A673 (cell line): ENCODE measurements at regions of chr9 and their contacts with region 1.

Region 1: DNA sequence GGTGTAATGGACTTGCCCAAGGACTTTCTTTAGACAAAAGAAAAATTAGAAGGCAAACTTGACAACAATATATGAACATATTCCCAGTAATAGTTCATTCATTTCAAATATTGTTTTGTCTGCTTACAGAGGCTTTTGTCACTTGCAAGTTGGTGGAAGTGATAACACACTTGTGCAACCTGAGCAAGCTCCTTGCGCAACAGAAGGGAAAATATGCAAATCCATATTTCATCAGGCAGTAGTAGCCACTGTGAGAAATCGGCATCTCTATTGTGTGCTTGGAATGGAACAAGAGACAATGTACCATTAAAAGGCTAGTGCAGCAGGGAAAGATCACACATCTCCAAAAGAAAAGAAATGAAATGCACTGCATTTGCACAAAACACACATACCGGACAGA is 125.3 kb upstream of the RASEF start:
- DNase-seq: no peak
- H3K4me3 ChIP-seq: no peak overlapping the region
- H3K27ac ChIP-seq: no peak overlapping the region
- H3K4me1 ChIP-seq: no peaks in the 10 kb centered on the region
- H3K27me3 ChIP-seq: peaks cover 21% of the 10 kb centered on the region
- CTCF ChIP-seq: no peak

Region 2: DNA sequence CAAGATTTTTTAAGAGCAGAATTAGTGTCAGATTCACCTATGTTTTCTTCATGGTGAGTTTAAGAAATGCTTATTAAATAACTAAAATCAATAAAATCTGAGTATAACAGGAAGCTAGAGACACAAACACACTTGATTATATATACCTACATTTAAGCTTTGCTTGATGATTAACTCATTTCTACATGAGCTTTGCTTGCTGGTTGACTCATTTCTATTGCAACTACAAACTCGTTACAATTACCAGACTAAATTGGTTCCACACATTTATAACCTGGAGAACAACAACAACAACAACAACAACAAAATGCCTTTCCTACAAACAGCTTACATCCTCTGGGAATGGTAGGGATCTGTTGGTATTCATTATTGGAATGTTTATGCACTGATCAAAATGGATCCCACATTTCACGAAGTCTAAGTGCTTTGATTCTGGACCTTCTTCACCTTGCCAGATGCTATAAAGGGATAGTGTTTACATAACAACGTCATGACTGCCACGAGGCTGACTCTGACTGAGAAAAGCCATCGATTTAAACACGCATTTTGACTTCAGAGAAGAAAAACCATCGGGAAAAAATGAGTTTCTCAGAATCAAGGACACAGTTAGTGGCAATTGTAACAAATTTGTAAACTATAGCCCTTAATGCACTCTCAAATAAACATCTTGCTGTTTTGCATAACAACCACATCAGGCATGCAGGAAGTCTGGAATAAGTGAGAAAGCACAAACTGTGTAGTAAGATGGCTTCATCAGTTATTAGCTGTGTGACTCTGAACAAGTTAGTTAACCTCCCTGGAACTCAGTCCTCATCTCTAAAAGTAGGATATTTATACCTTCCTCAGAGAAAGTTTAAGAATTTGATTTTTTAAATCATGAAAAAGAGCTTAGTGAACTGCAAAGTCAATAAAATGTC is 175.1 kb before region 1 on chr9:
- CTCF ChIA-PET with region 1: no interaction called
- POLR2A ChIA-PET with region 1: no interaction called
- intact Hi-C with region 1: no loop called
- DNase-seq: no peak
- H3K4me3 ChIP-seq: no peak overlapping the region
- H3K27ac ChIP-seq: no peak overlapping the region
- H3K4me1 ChIP-seq: no peaks in the 10 kb centered on the region
- H3K27me3 ChIP-seq: peaks cover 5% of the 10 kb centered on the region
- CTCF ChIP-seq: no peak

Region 3: DNA sequence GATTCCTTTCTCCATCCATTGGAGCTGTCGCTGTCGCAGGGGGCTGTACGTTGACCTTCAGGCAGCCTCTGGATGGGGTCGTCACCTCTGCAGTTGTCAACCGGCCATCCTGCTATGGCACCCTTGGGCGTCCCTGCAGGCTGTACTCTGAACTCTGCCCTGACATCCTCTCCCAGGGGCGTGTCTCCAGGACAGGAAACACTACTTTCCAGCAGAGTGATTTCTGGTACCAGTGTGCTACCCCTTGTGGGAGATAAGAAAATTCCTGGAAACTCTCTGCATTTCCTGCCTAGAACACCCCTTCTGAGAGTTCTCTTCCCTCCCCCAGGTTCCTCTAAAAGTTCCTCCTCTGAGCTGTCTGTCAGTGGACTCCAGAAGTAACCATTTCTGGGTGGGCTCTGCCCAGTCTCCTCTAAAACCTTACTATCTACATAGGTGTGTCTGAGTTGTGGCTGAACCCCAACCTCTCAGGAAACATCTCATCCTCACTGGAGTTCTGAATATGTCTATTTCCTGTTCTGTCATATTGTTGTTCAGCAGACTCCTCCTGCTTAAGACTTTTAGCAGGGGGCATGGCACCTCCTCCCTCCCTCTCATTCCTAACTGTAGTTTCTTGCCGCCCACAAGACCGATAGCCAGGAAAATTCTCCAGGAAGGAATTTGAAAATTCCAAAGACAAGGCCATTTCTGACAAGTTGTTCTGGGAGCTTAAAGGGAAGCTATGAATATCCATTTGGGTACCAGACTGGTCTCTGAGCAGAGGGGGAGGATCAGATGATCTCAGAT is 20.0 kb after region 1 on chr9:
- CTCF ChIA-PET with region 1: interaction called, 10 read pairs
- POLR2A ChIA-PET with region 1: no interaction called
- intact Hi-C with region 1: no loop called
- DNase-seq: no peak
- H3K4me3 ChIP-seq: no peak overlapping the region
- H3K27ac ChIP-seq: no peak overlapping the region
- H3K4me1 ChIP-seq: no peaks in the 10 kb centered on the region
- H3K27me3 ChIP-seq: no peaks in the 10 kb centered on the region
- CTCF ChIP-seq: no peak